CD4-positive, alpha-beta T cell (primary cell): ENCODE measurements at regions of chr12 and their contacts with region 1.

Region 1: GRCh38 chr12:10364815-10365622 is 24.8 kb downstream of the KLRK1 start:
- DNase-seq: peak; percentile 23 to 87 (median 48)
- ATAC-seq: peak; percentile 81
- H3K4me3 ChIP-seq: peak overlapping the region; percentile 73
- H3K4me3 Mint-ChIP-seq: no peak overlapping the region
- H3K27ac ChIP-seq: peak overlapping the region; percentile 52 to 77
- H3K27ac Mint-ChIP-seq: no peak overlapping the region
- H3K4me1 ChIP-seq: peaks cover 18% of the 10 kb centered on the region
- H3K4me1 Mint-ChIP-seq: peaks cover 12% of the 10 kb centered on the region
- H3K27me3 ChIP-seq: no peaks in the 10 kb centered on the region
- H3K27me3 Mint-ChIP-seq: no peaks in the 10 kb centered on the region
- CTCF ChIP-seq: no peak

Region 2: DNA sequence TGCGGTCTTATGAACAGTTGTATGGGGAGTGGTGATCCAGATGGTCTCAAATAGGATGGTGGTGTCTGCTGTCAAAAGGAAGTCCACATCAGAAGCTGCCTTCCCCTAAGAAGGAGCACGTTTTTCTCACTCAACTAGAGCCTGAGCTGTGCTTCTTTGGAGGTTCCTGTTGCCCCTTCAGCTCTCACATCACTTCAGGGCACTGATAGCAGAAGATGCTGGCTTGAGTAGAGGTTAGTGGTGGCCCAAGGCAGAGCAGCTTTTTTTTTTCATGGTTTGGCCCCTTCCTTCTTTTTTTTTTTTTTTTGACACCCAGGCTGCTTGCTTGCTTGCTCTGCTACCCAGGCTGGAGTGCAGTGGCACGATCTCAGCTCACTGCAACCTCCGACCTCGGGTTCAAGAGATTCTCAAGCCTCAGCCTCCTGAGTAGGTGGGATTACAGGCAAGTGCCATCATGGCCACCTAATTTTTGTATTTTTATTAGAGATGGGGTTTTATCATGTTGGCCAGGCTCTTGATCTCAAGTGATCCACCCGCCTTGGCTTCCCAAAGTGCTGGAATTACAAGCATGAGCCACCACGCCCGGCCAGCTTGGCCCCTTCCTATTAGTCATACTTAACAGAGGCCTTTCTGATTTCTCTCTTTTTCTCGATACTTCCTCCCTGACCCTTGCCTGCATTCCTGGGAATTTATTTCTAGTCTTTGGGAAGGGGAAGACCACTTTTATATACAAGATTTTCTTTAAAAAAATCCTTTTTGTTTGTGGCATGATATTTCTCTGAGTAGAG is 25.8 kb before region 1 on chr12:
- CTCF ChIA-PET with region 1: no interaction called
- POLR2A ChIA-PET with region 1: no interaction called
- intact Hi-C with region 1: no loop called
- DNase-seq: no peak
- ATAC-seq: no peak
- H3K4me3 ChIP-seq: no peak overlapping the region
- H3K4me3 Mint-ChIP-seq: no peak overlapping the region
- H3K27ac ChIP-seq: no peak overlapping the region
- H3K27ac Mint-ChIP-seq: no peak overlapping the region
- H3K4me1 ChIP-seq: no peaks in the 10 kb centered on the region
- H3K4me1 Mint-ChIP-seq: no peaks in the 10 kb centered on the region
- H3K27me3 ChIP-seq: no peaks in the 10 kb centered on the region
- H3K27me3 Mint-ChIP-seq: no peaks in the 10 kb centered on the region
- CTCF ChIP-seq: no peak

Region 3: DNA sequence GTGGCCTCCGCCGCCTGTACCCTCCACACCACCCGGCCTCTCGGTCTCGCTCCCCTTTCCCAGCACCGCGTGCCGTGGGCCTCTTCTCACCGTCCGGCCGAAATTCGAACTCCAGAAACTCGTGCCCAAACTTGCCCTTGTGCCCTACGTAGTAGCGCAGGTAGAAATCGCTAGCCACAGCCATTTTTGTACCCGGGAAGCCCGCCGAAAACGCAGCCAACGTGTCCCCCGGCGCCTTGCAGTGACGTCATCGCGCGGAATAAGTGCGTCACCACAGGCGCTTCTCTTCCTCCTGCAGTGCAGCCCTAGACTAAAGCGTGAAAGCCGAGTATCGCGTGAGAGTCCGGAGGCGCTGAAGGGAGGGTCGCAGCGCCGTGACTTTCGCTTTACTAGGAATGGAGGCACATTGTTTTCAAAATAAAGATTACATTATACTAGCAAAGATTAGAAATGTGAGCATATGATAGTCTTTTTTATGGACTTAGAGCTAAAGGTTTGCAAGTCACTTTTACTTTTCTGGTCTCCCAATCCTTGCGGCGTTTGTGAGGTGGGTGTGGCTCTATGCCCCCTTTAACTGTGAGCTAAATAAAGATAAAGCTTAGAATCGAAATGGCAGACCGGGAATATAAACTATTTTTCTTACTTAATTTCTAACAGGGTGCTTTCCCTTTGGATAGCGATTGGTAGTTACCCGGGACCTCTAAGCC is 248.5 kb after region 1 on chr12 and contains the start of gene MAGOHB:
- CTCF ChIA-PET with region 1: no interaction called
- POLR2A ChIA-PET with region 1: interaction called, 26 read pairs
- intact Hi-C with region 1: loop called (anchors 2 to 5 kb)
- DNase-seq: peak; percentile 95 to 100 (median 98)
- ATAC-seq: peak; percentile 91
- H3K4me3 ChIP-seq: peak within 1 kb of the TSS; percentile 94
- H3K4me3 Mint-ChIP-seq: peak within 1 kb of the TSS; percentile 99
- H3K27ac ChIP-seq: peak within 1 kb of the TSS; percentile 93 to 95
- H3K27ac Mint-ChIP-seq: peak within 1 kb of the TSS; percentile 99
- H3K4me1 ChIP-seq: peaks cover 11% of the 10 kb centered on the region
- H3K4me1 Mint-ChIP-seq: peaks cover 26% of the 10 kb centered on the region
- H3K27me3 ChIP-seq: no peaks in the 10 kb centered on the region
- H3K27me3 Mint-ChIP-seq: peaks cover 17% of the 10 kb centered on the region
- CTCF ChIP-seq: no peak
- total RNA-seq, gene MAGOHB: 7.5 to 7.7 TPM

Region 4: GRCh38 chr12:11177169-11177568 is 812.1 kb after region 1 on chr12:
- CTCF ChIA-PET with region 1: no interaction called
- POLR2A ChIA-PET with region 1: interaction called, 19 read pairs
- intact Hi-C with region 1: loop called in 1 of 2 experiments (anchors 5 kb)
- DNase-seq: no peak
- ATAC-seq: no peak
- H3K4me3 ChIP-seq: no peak overlapping the region
- H3K4me3 Mint-ChIP-seq: no peak overlapping the region
- H3K27ac ChIP-seq: no peak overlapping the region
- H3K27ac Mint-ChIP-seq: no peak overlapping the region
- H3K4me1 ChIP-seq: peaks cover 1% of the 10 kb centered on the region
- H3K4me1 Mint-ChIP-seq: peaks cover 29% of the 10 kb centered on the region
- H3K27me3 ChIP-seq: no peaks in the 10 kb centered on the region
- H3K27me3 Mint-ChIP-seq: no peaks in the 10 kb centered on the region
- CTCF ChIP-seq: no peak